ENCODE measurements at regions of chr9 and their contacts with region 1.

Region 1: DNA sequence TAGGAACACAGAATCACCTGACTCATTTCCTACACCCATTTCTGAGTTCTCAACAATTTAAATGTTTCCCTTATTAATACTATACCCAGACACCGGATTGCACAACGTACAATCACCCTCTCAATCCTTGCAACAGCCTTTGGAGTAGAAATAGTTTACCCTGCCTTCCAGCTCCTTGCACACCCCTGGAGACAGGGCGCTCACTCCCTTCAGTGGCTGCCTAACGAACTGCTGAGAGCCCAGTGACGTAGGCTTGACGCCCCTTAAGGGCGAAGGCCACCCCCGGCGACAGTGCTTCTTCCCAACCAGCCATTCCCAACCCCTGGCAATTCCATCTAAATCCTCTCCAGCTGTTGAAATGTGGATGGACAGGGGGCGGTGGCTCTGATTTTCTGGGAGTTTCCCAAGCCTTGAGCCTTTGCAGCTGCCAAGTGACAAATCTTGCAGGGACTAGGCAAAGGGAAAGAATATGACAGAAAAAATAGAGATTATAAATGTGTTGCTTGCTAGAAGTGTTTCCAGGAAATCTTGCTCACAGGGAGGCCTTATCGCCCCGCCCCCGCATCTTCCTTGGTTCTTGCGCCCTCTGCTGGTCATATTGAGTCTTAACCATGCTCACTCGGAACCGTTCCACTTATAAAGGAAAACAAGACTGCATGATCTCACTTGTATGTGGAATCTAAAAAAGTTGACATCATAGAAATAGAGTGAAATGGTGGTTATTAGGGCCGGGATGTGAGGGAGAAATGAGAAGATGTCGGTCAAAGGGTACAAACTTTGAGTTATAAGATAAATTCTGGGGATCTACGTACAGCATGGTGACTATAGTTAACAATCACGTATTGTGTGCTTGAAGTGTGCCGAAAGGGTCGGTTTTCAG is 7.6 kb upstream of the BARX1 start:
- DNase-seq: peak; percentile 85
- ATAC-seq: peak; percentile 85
- H3K4me3 ChIP-seq: no peak overlapping the region
- H3K27ac ChIP-seq: no peak overlapping the region
- H3K4me1 ChIP-seq: peaks cover 33% of the 10 kb centered on the region
- H3K27me3 ChIP-seq: peaks cover 53% of the 10 kb centered on the region
- CTCF ChIP-seq: peak; percentile 87

Region 2: DNA sequence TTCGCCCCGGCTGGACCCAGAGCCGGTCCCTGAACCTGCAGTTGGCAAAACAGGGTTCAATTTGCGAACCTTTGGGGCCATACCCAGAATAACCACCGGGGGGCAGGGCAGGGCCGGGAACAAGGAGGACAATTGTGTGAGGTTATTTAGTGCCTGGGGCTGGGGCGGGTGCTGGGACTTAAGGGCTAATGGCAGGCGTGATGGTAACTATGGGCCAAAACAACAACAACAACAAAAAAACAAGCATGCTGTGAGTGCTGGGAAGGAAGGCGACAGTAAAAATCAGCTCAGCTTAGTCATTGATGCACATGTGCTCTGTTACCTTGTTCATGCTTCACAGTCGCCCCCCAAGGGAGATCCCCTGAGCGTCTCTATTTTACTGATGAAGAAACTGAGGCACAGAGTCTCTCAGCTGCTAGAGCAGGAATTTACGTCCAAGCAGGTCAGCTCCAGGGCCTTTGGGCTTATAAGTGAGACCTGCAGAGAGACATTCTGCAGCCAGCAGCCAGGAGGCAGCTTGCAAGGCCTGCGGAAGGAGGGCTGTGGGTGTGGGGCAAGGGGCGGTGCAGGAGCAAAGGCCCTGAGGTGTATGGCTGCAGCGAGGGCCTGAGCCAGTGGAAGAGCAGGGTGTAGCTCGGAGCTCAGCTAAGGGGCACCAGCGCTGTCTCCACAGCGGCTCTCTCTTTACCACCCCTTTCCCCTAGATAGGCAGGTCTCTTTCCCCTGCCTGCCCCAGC is 280.4 kb before region 1 on chr9:
- intact Hi-C with region 1: loop called (anchors 10 kb)
- DNase-seq: peak; percentile 67
- ATAC-seq: peak; percentile 66 to 77
- H3K4me3 ChIP-seq: no peak overlapping the region
- H3K27ac ChIP-seq: no peak overlapping the region
- H3K4me1 ChIP-seq: no peaks in the 10 kb centered on the region
- H3K27me3 ChIP-seq: no peaks in the 10 kb centered on the region
- CTCF ChIP-seq: peak; percentile 73

Region 3: GRCh38 chr9:93792358-93792757 is 170.4 kb before region 1 on chr9:
- intact Hi-C with region 1: no loop called
- DNase-seq: no peak
- ATAC-seq: no peak
- H3K4me3 ChIP-seq: no peak overlapping the region
- H3K27ac ChIP-seq: no peak overlapping the region
- H3K4me1 ChIP-seq: no peaks in the 10 kb centered on the region
- H3K27me3 ChIP-seq: no peaks in the 10 kb centered on the region
- CTCF ChIP-seq: no peak

Region 4: GRCh38 chr9:94623253-94623652 is 660.5 kb after region 1 on chr9:
- intact Hi-C with region 1: no loop called
- DNase-seq: peak; percentile 60
- ATAC-seq: peak; percentile 53 to 70
- H3K4me3 ChIP-seq: no peak overlapping the region
- H3K27ac ChIP-seq: no peak overlapping the region
- H3K4me1 ChIP-seq: peaks cover 12% of the 10 kb centered on the region
- H3K27me3 ChIP-seq: no peaks in the 10 kb centered on the region
- CTCF ChIP-seq: peak; percentile 18